ENCODE measurements at regions of chr10 and their contacts with region 1.

Region 1: GRCh38 chr10:6269953-6270867 is 67.5 kb downstream of the PFKFB3 start:
- DNase-seq: peak; percentile 55
- ATAC-seq: peak; percentile 80
- H3K4me3 ChIP-seq: no peak overlapping the region
- H3K27ac ChIP-seq: peak overlapping the region; percentile 50
- H3K4me1 ChIP-seq: peaks cover 40% of the 10 kb centered on the region
- H3K27me3 ChIP-seq: no peaks in the 10 kb centered on the region
- CTCF ChIP-seq: no peak
- EP300 ChIP-seq: peak; percentile 98; a peak in 3 of 4 replicates
- POLR2A ChIP-seq: no peak
- RAD21 ChIP-seq: 0 out of 2 replicates have a peak, but pooled peaks have one; percentile 25

Region 2: DNA sequence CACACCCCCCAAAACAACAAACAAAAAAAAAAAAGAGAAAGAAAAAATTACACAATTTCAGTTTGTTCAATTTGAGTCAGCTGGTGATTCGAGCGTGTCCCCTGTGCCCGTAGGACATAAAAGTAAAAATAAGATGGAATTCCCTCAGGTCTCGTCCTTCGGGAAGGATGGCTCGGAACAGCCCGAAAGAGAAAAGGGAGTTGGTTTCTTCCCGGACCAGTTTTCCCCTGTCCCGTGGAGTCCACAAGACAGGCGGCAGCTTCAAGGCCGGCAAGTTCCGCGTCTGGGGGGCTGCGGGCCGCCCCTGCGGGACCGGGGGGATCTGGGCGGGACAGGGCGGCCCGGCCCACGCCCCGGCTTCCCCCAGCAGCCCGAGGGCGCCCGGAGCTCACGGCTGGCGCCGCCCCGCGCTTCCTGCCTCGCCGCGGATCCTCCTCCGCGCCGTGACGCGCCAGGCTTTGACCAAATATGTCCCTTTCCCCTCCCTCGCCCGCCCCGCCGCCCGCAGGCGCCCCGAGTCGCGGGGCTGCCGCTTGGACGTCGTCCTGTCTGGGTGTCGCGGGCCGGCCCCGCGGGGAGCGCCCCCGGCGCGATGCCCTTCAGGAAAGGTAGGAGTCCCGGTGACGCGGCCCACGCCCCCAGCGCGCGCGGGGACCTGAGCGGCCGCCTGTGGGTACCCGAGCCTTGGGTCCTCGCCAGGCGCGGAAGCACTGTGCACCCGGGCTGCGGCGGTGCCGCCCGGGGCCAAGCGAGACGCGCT is 125.6 kb before region 1 on chr10:
- CTCF ChIA-PET with region 1: no interaction called
- POLR2A ChIA-PET with region 1: no interaction called
- RAD21 ChIA-PET with region 1: no interaction called
- SMC1A ChIA-PET with region 1: no interaction called
- in situ Hi-C with region 1: no loop called
- intact Hi-C with region 1: loop called (anchors 5 kb)
- DNase-seq: no peak
- ATAC-seq: peak; percentile 79
- H3K4me3 ChIP-seq: peak overlapping the region; percentile 88
- H3K27ac ChIP-seq: peak overlapping the region; percentile 67
- H3K4me1 ChIP-seq: peaks cover 49% of the 10 kb centered on the region
- H3K27me3 ChIP-seq: no peaks in the 10 kb centered on the region
- CTCF ChIP-seq: peak in 1 of 3 experiments; percentile 15; a peak in 1 of 6 replicates
- EP300 ChIP-seq: no peak
- POLR2A ChIP-seq: peak; percentile 66
- RAD21 ChIP-seq: no peak